Ascending aorta (tissue), 2 donors: ENCODE measurements at regions of chrX and their contacts with region 1.

Region 1: DNA sequence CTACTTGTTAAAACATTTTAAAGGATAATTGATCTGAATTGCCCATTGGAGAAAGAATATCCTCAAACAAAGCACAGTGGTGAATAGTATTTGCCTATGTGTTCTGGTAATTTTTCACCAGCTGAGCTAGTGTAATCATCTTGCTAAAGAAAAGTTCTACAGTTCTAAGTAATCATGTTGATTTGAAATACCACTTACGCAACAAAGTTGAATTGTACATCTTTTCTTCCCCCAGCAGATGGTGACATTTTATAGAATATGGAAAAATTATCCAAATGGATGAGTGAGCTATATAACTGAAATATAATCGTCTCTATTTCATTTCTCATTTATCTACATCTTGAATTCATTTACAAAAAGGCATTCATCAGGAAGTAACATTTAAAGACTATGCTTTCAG is 9.7 kb upstream of the ZNF674 start:
- DNase-seq: no peak
- H3K4me3 ChIP-seq: no peak overlapping the region
- H3K27ac ChIP-seq: no peak overlapping the region
- H3K4me1 ChIP-seq: no peaks in the 10 kb centered on the region
- H3K27me3 ChIP-seq: no peaks in the 10 kb centered on the region
- CTCF ChIP-seq: peak in 2 of 3 experiments; percentile 9 to 21

Region 2: DNA sequence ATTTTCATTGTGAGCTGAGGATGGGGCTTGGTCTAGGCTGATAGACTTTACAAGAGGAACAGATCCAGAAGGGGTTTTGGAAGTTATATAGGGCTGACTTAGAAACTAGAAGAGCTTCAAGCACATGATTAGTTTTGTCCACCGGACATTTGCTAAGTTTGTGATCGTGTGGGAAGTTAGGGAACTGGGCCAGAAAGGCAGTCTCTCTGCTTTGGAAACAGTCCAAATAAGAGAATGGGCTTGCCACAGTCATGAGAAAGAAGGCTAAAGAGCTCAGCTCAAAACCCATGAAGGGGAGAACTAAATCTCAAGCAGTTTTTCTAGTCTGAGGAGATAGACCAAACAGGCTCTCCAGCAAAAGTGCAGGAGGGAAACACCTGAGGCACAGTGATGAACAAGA is 77.5 kb before region 1 on chrX:
- intact Hi-C with region 1: no loop called
- DNase-seq: no peak
- H3K4me3 ChIP-seq: no peak overlapping the region
- H3K27ac ChIP-seq: no peak overlapping the region
- H3K4me1 ChIP-seq: no peaks in the 10 kb centered on the region
- H3K27me3 ChIP-seq: no peaks in the 10 kb centered on the region
- CTCF ChIP-seq: no peak

Region 3: GRCh38 chrX:46575991-46576392 is 21.1 kb after region 1 on chrX:
- intact Hi-C with region 1: no loop called
- DNase-seq: no peak
- H3K4me3 ChIP-seq: peak overlapping the region; percentile 67 to 81
- H3K27ac ChIP-seq: peak overlapping the region in 1 of 2 donors; percentile 25
- H3K4me1 ChIP-seq: no peaks in the 10 kb centered on the region
- H3K27me3 ChIP-seq: no peaks in the 10 kb centered on the region
- CTCF ChIP-seq: no peak

Region 4: GRCh38 chrX:46620505-46620904 is 65.6 kb after region 1 on chrX:
- intact Hi-C with region 1: no loop called
- DNase-seq: no peak
- H3K4me3 ChIP-seq: no peak overlapping the region
- H3K27ac ChIP-seq: no peak overlapping the region
- H3K4me1 ChIP-seq: peaks cover 0 to 3% of the 10 kb centered on the region in 2 donors
- H3K27me3 ChIP-seq: no peaks in the 10 kb centered on the region
- CTCF ChIP-seq: no peak

Region 5: DNA sequence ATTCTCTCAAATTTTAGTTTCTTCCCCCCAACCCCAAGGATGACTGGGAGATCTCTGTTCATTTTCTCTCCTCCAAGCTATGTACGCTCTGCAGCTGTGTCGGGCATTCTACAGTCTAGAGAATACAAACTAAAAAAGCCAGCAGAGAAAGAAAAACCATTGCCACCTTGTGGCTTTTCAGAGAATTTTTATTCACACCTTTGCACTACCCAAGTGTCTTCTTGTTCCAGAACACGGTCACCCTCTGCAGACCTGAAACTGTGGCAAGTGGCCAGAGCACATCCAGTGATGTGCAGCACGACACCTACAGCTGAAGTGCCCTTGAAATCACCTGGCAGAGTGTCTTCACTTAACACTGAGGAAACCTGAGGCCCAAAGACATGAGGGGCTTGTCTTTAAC is 87.2 kb after region 1 on chrX:
- intact Hi-C with region 1: loop called (anchors 2 kb)
- DNase-seq: no peak
- H3K4me3 ChIP-seq: no peak overlapping the region
- H3K27ac ChIP-seq: no peak overlapping the region
- H3K4me1 ChIP-seq: no peaks in the 10 kb centered on the region
- H3K27me3 ChIP-seq: no peaks in the 10 kb centered on the region
- CTCF ChIP-seq: peak in 1 of 3 experiments; percentile 51

Region 6: GRCh38 chrX:46686003-46686645 is 131.2 kb after region 1 on chrX:
- intact Hi-C with region 1: loop called (anchors 2 kb)
- DNase-seq: peak in 1 of 2 donors; percentile 67
- H3K4me3 ChIP-seq: no peak overlapping the region
- H3K27ac ChIP-seq: no peak overlapping the region
- H3K4me1 ChIP-seq: no peaks in the 10 kb centered on the region
- H3K27me3 ChIP-seq: no peaks in the 10 kb centered on the region
- CTCF ChIP-seq: peak; percentile 28 to 60 (median 43)